Right cardiac atrium (tissue), 5 donors: ENCODE measurements at regions of chr10 and their contacts with region 1.

Region 1: DNA sequence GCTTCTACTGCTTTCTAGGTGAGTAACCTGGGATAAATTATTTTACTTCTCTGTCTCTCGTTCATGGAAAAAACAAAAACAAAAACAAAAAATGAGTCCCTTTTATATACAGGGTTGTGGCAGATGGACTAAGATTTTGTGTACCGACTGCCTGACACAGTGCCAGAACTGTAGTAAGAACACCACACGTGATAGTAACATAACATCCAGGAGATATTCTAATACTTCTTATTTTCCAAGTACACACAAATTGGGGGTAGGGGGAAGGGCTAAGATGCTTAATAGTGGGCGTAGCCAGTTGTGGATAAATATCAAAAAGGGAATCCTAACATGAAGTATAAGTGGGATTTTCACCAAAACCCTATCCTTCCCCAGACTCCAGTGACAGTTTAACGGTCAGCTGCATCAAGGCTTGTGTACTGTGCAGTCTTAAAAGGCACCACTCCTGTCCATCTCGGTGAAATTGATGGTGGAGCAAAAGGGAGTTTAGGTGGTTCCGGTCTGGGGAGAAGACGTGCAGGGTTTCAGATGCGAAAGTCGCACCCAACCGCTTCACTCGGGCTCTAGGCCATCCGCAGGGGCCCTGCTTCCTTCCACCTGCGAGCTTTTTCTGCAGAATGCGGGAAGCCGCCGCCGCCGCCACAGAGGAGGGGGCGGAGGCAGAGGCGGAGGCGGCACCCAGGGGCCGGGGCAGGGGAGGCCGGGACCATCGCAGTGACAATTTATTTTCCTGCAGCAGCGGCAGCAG is at the start of gene STAMBPL1:
- DNase-seq: peak in 1 of 3 donors; percentile 81
- ATAC-seq: peak; percentile 71 to 79
- H3K4me3 ChIP-seq: peak within 1 kb of the TSS; percentile 54
- H3K27ac ChIP-seq: peak within 1 kb of the TSS; percentile 50
- H3K4me1 ChIP-seq: peaks cover 2% of the 10 kb centered on the region
- H3K27me3 ChIP-seq: no peaks in the 10 kb centered on the region
- total RNA-seq, gene STAMBPL1: 9.4 to 13.0 (median 10.4) TPM

Region 2: GRCh38 chr10:88598055-88598454 is 281.7 kb before region 1 on chr10:
- intact Hi-C with region 1: no loop called
- DNase-seq: no peak
- ATAC-seq: no peak
- H3K4me3 ChIP-seq: no peak overlapping the region
- H3K27ac ChIP-seq: no peak overlapping the region
- H3K4me1 ChIP-seq: no peaks in the 10 kb centered on the region
- H3K27me3 ChIP-seq: no peaks in the 10 kb centered on the region

Region 3: GRCh38 chr10:88624840-88625239 is 254.9 kb before region 1 on chr10:
- intact Hi-C with region 1: no loop called
- DNase-seq: no peak
- ATAC-seq: no peak
- H3K4me3 ChIP-seq: no peak overlapping the region
- H3K27ac ChIP-seq: no peak overlapping the region
- H3K4me1 ChIP-seq: no peaks in the 10 kb centered on the region
- H3K27me3 ChIP-seq: no peaks in the 10 kb centered on the region

Region 4: GRCh38 chr10:88918191-88918905 is 38.6 kb after region 1 on chr10:
- intact Hi-C with region 1: loop called in 1 of 4 experiments (anchors 2 kb)
- DNase-seq: no peak
- ATAC-seq: no peak
- H3K4me3 ChIP-seq: no peak overlapping the region
- H3K27ac ChIP-seq: no peak overlapping the region
- H3K4me1 ChIP-seq: peaks cover 2% of the 10 kb centered on the region
- H3K27me3 ChIP-seq: no peaks in the 10 kb centered on the region